Gastrocnemius medialis (tissue), 4 donors: ENCODE measurements at regions of chr16 and their contacts with region 1.

Region 1: GRCh38 chr16:85799497-85800337 is at the starts of genes COX4I1 and EMC8:
- DNase-seq: peak; percentile 94
- ATAC-seq: peak; percentile 95
- H3K4me3 ChIP-seq: peak within 1 kb of the TSS; percentile 67 to 97 (median 91)
- H3K27ac ChIP-seq: peak within 1 kb of the TSS; percentile 90 to 98 (median 94)
- H3K4me1 ChIP-seq: peaks cover 17 to 26% of the 10 kb centered on the region in 2 donors
- H3K27me3 ChIP-seq: no peaks in the 10 kb centered on the region
- CTCF ChIP-seq: peak in 1 of 5 experiments; percentile 5
- POLR2A ChIP-seq: peak; percentile 98 to 99
- total RNA-seq, gene COX4I1: 666 to 782 (median 689) TPM
- total RNA-seq, gene EMC8: 29.6 to 39.8 (median 36.4) TPM

Region 2: GRCh38 chr16:85610508-85611332 is 189.0 kb before region 1 on chr16:
- in situ Hi-C with region 1: no loop called
- intact Hi-C with region 1: loop called (anchors 1 kb)
- DNase-seq: peak; percentile 74 to 83
- ATAC-seq: peak; percentile 24 to 31
- H3K4me3 ChIP-seq: peak overlapping the region; percentile 66 to 96 (median 81)
- H3K27ac ChIP-seq: peak overlapping the region; percentile 91 to 99 (median 95)
- H3K4me1 ChIP-seq: peaks cover 34 to 35% of the 10 kb centered on the region in 2 donors
- H3K27me3 ChIP-seq: no peaks in the 10 kb centered on the region
- CTCF ChIP-seq: peak; percentile 99 to 100 (median 99)
- POLR2A ChIP-seq: no peak

Region 3: GRCh38 chr16:86044241-86044671 is 244.5 kb after region 1 on chr16:
- in situ Hi-C with region 1: no loop called
- intact Hi-C with region 1: no loop called
- DNase-seq: no peak
- ATAC-seq: no peak
- H3K4me3 ChIP-seq: no peak overlapping the region
- H3K27ac ChIP-seq: no peak overlapping the region
- H3K4me1 ChIP-seq: no peaks in the 10 kb centered on the region
- H3K27me3 ChIP-seq: peaks cover 8 to 30% (median 17%) of the 10 kb centered on the region in 3 donors
- CTCF ChIP-seq: peak in 1 of 5 experiments; percentile 7
- POLR2A ChIP-seq: no peak

Region 4: DNA sequence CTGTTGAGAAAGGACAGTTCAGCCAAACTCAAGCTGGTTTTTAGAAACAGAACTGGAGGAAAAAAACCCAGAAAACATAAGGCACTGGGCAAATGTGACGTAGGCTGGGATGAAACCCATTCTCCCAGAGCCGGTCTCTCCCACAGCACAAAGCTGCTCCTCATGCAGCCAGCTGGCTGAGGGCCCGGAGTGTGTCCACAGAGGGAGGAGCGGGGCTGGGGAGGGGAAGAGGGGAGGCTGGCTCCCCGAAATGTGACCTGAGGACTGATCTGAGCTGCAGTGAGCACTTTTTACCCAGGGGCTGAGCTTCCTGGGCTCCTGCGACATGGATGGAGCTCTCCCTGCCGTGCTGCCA is 731.5 kb after region 1 on chr16:
- in situ Hi-C with region 1: loop called in 1 of 4 experiments (anchors 25 kb)
- intact Hi-C with region 1: no loop called
- DNase-seq: no peak
- ATAC-seq: no peak
- H3K4me3 ChIP-seq: no peak overlapping the region
- H3K27ac ChIP-seq: no peak overlapping the region
- H3K4me1 ChIP-seq: peaks cover 0 to 18% of the 10 kb centered on the region in 2 donors
- H3K27me3 ChIP-seq: no peaks in the 10 kb centered on the region
- CTCF ChIP-seq: no peak
- POLR2A ChIP-seq: no peak